Left ventricle myocardium superior (tissue), 1 donor: ENCODE measurements at regions of chr11 and their contacts with region 1.

Region 1: GRCh38 chr11:58573451-58574104 is 2.1 kb downstream of the LPXN start:
- DNase-seq: no peak
- ATAC-seq: no peak

Region 2: DNA sequence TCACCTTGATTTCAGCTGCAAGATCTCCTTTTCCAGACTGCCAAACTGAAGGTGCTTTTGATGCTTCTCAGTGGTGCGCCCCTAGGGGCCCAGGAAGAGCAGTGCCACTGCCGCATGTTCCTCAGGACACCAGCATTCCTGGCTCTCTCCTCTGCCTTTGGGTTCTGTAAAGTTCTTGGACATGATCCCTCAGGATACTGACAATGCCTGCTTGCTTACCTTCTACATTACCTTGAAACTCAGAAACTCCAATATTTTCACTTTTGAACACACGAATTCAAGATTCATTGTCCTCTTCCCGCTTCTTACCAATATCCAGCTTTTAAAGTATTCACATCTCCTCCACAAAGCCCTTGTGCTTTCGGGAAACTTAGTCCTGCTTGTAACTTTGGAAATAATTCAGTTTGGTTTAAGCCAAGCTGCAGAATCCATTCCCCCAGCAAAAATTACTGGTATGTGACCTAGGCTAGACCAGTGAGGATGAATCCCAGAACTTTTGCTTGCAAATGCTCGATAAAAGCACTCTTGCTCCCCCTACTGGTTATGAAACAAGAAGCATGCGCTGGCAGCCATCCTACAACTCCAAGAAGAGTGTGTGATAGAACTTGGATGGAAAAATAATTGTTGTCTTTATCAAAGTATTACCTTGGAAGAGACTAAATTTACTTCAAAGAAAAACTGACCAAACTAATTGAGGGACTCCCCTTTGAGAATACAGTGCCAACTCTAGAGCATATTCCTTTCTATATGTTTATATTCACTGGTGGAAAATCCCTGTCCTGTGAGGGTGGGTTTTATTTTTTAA is 49.1 kb before region 1 on chr11:
- intact Hi-C with region 1: no loop called
- DNase-seq: peak; percentile 62
- ATAC-seq: peak; percentile 87

Region 3: DNA sequence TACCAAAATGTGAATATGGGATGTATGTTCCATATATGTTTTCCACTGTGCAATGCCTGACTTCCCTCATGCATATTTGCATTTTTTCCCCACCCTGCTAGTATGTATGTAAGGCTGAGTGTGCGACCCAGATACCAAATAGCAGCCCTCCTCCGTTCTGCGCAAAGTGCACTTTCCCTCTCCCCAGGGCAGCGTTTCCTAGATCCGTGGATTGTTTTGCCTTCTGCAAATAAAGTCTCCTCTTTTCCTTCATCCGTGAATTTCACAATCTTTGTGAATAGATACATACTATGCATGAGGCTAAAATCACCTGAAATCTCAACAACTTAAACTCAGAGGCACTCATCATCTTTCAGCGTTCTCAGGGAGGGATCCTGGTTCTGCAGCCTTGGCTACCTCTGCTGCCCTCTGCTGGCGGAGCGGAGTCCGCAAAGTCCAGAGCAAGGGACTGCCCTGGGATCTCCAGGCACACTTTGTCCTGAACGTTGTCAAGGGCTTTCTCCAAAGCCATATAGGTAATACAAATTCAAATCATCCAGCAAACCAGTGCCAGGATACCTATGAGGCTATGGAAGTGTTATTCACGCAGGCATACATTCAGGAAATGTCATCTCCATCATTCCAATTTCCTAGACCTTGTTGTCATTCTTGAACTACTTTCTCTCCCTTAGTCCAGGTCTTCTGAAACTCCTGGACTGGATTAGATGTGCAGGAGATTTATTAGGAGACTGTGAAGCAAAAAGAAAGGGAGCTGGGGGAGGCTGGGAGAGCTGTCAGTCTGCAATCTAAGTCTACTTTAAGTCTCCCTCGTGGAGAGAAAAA is 102.0 kb after region 1 on chr11:
- intact Hi-C with region 1: loop called (anchors 5 kb)
- DNase-seq: peak; percentile 87
- ATAC-seq: peak; percentile 92